ENCODE measurements at regions of chr1 and their contacts with region 1.

Region 1: GRCh38 chr1:204494281-204495077 is at the start of gene PIK3C2B:
- DNase-seq: peak; percentile 62
- H3K4me3 Mint-ChIP-seq: peak within 1 kb of the TSS; percentile 95
- H3K27ac Mint-ChIP-seq: peak within 1 kb of the TSS; percentile 93
- H3K4me1 Mint-ChIP-seq: peaks cover 39% of the 10 kb centered on the region
- H3K27me3 Mint-ChIP-seq: peaks cover 4% of the 10 kb centered on the region
- total RNA-seq, gene PIK3C2B: 16.9 and 18.5 TPM in 2 replicates

Region 2: GRCh38 chr1:204411451-204412204 is 82.9 kb before region 1 on chr1 and contains the start of gene PPP1R15B:
- intact Hi-C with region 1: no loop called
- DNase-seq: peak; percentile 98
- H3K4me3 Mint-ChIP-seq: peak within 1 kb of the TSS; percentile 98
- H3K27ac Mint-ChIP-seq: peak within 1 kb of the TSS; percentile 98
- H3K4me1 Mint-ChIP-seq: peaks cover 14% of the 10 kb centered on the region
- H3K27me3 Mint-ChIP-seq: no peaks in the 10 kb centered on the region
- total RNA-seq, gene PPP1R15B: 63.4 and 64.3 TPM in 2 replicates

Region 3: GRCh38 chr1:204446370-204447111 is 47.9 kb before region 1 on chr1:
- intact Hi-C with region 1: loop called (anchors 2 kb)
- DNase-seq: peak; percentile 63
- H3K4me3 Mint-ChIP-seq: no peak overlapping the region
- H3K27ac Mint-ChIP-seq: peak overlapping the region; percentile 55
- H3K4me1 Mint-ChIP-seq: peaks cover 14% of the 10 kb centered on the region
- H3K27me3 Mint-ChIP-seq: no peaks in the 10 kb centered on the region

Region 4: DNA sequence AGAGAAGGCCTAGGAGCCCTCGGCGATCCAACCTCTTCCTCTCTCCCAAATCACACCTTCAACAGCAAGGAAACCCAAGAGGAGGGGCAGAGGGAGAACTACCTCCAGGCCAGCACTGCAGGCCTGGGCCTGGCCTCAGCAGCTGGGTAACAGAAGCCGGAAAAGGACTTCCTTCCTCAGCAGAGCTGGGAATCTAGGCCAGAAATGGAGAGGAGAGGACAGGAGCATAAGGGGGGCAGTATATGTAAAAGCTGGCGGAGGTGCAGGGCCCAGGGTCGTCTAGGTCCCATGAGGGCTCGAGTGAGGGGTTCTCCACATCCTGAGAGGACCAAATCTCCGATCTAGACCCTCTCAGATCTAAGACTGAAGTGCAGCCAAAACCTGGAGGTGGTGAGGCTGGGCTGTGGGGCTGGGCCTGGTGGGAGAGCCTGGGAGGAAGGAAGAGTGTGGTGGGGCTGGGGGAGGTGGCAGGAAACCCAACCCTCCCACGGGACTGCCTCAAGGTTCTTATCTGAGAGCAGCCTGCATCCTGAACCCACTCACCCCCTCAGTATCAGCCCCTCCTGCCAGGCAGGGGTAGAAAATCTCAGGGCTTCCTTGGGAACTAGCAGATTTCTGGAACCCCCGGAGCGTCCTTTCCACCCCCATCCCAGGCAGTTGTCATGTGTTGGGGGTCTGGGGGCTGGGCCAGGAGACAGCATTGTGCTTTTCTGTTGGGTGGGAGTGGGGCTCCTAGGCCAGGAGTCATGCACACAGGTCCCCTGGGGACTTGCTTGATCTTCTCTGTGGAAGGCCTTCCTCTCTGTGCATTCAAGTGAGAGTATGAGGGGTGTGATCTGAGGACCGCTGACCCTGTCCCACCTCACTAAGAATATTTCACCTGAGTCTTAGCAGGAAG is 32.9 kb before region 1 on chr1:
- intact Hi-C with region 1: loop called (anchors 2 kb)
- DNase-seq: no peak
- H3K4me3 Mint-ChIP-seq: no peak overlapping the region
- H3K27ac Mint-ChIP-seq: peak overlapping the region; percentile 47
- H3K4me1 Mint-ChIP-seq: peaks cover 46% of the 10 kb centered on the region
- H3K27me3 Mint-ChIP-seq: no peaks in the 10 kb centered on the region

Region 5: DNA sequence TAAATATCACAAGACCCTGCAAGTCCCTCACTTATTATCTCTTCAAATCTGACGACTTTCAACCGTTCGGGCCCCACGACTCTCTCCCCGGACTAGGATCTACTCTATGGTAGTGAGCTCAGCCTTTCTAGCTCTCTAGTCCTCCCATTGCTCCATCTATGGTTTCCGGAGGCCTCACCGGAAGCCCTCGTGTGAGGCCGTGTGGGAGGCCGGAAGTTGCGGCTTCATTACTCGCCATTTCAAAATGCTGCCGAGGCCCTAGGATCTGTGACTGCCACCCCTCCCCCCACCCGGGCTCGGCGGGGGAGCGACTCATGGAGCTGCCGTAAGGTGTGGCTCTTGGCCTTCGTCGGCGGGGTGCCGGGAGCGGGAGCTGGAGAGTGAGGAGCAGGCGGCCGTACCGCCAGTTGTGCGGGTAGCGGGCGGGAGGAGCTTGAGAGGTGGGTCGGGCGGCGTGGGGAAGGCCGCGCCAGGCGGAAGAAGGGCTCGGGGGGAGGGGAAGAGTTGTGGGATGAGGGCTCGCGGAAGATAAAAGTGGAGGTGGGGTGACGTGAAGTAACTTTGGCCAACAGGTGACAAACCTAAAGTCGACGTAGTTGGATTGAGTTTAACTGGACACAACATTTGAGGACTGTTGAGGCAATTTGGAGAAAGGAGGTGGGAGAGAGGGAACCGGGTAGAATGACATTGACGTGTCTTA is 21.9 kb after region 1 on chr1 and contains the start of gene MDM4:
- intact Hi-C with region 1: loop called (anchors 2 kb)
- DNase-seq: peak; percentile 91
- H3K4me3 Mint-ChIP-seq: no peak within 1 kb of the TSS
- H3K27ac Mint-ChIP-seq: no peak within 1 kb of the TSS
- H3K4me1 Mint-ChIP-seq: peaks cover 49% of the 10 kb centered on the region
- H3K27me3 Mint-ChIP-seq: no peaks in the 10 kb centered on the region
- total RNA-seq, gene MDM4: 74.5 and 79.1 TPM in 2 replicates

Measured in activated T-helper 2 cell treated with anti-CD3 and anti-CD28 coated beads, Interferon-gamma antibody, Interleukin-2, Interleukin-4, amounts not matched to agents 10 μg/mL and 5 μg/mL and 100 μg/mL, durations not matched to agents 14 hours and 24 hours and 36 hours (primary cell).